HEK293T (cell line): ENCODE measurements at regions of chr15 and their contacts with region 1.

Region 1: GRCh38 chr15:74460871-74461846 is at the start of gene UBL7:
- DNase-seq: peak; percentile 95

Region 2: GRCh38 chr15:74265046-74265639 is 196.0 kb before region 1 on chr15:
- CTCF ChIA-PET with region 1: no interaction called
- POLR2A ChIA-PET with region 1: no interaction called
- DNase-seq: peak; percentile 50

Region 3: DNA sequence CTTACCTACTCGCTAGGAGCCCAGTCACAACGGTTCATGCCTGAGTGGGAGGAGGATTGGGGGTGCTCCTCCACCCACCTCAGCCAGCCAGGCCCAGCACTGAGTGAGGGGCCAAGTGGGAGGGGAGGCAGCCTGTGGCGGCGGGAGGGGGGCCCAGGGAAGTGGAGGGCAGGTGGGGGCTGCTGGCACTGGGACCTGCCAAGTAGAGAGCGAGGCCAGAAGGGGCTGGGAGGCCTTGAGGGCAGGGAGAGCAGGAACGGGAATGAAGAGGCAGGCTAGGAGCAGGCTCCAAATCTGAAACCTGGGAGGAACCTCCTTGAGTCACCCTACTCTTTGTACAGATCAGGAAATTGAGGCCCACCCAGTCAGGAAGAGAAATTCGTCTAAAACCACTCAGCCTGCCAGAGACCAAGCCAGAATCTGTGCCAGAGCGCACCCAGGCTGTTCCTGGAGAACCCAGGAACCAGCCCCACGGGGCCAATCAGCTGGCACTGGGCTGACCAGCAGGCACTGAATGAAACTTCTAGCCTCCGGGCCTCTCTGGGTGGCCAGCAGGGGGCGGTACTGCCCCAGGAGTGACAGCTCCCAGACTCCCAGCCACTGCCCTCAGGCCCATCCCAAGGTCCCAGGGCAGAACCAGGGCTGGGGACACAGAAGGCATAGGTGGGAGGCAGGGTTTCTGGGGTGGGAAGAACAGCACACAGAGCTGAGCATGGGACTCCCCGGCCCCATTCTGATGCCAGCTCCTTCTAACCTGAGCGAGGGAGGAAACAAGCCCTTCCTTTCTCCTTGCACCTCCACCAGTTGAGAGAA is 78.9 kb before region 1 on chr15:
- CTCF ChIA-PET with region 1: no interaction called
- POLR2A ChIA-PET with region 1: interaction called, 13 read pairs
- DNase-seq: peak; percentile 94

Region 4: GRCh38 chr15:74438721-74439316 is 22.3 kb before region 1 on chr15:
- CTCF ChIA-PET with region 1: no interaction called
- POLR2A ChIA-PET with region 1: interaction called, 14 read pairs
- DNase-seq: peak; percentile 85

Region 5: DNA sequence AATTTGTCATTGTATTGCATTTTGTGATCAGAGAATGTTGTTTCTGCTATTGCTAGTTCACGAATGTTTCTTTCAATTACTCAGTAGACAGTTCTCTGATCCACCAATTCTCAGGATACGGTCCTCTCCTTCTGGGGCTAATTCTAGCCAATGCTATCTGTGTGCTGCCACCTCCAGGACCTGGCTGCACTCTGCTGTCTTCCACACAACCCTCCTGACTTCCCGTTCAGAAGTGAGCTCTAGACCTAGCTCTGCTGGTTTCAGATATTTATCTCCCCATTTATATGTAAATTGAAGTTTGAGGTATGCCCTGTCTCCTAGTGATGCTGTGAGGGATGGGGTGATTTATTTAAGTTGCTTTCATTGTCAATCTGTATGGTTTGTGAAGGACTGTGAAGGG is 21.5 kb after region 1 on chr15:
- CTCF ChIA-PET with region 1: interaction called, 3 read pairs
- POLR2A ChIA-PET with region 1: interaction called, 10 read pairs
- DNase-seq: no peak

Region 6: DNA sequence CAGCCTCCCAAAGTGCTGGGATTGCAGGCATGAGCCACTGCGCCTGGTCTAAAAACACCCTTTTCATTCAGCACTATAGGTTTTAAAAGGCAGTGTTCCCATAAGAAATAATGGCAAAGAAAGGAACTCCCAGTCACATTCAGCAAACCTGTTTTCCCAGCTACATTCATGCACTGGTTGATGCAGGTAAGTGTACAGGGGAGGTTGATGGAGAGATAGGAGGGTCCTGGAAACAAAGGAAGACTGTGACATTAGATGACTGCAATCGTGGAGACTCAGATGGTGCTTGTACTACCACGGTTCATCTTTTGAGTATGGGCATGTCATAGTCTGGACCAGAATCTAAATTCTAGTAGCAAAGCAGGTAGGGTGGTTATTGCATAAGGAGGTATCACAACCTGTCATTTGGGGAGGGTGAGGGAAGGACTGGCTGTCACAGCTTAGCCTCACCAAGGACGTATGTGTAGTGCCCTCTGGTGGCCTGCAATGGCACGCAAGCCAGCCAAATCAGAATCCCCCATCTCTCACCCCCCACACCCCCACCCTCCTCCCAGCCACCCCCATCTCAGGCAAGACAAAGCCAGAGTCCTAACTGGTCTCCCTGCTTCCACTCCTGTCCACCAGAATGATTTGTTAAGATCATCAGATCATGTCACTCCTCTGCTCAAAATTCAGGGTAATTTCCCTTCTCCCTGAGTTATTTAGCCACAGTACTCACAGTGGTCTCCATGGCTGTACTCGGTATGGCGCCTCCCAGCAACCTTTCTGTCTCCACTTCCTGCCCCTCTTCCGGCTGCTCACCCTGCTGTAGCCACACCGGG is 28.6 kb after region 1 on chr15:
- CTCF ChIA-PET with region 1: interaction called, 3 read pairs
- POLR2A ChIA-PET with region 1: interaction called, 10 read pairs
- DNase-seq: peak; percentile 79

Region 7: DNA sequence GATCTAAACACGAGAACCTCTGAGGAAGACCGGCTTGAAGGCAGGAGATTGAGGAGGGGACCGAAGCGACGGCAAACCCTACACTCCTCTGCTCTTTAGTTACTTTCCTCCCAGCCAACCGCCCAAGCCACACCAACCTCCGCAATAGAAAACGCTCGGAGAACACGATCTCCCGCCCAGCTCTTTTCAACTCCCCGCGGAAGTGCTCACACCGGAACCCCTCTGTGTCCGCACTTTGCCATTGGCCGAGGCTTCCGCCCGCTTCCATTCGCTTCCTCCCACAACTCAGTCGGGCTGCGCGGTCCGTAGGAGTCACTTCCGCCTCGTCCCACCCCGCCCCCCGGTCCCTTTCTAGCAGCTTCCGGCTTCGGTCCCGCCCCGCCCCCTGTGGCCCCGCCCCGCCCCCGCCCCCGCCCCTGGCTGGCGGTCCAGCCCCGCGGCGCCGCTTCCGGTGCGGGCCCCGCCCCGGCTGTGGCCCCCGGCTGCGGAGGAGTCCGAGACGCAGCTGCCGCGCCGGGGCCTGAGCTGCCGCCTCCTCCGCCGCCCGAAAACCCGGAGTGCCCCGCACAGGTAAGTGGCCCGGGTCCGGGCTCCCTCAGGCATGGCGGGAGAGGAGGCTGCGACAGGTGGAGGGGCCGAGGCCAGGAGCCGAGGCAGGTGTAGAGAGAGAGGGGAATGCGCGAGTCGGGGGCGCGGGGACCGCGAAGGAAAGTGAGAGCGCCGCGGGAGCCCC is 79.8 kb after region 1 on chr15 and contains the start of gene ARID3B:
- CTCF ChIA-PET with region 1: no interaction called
- POLR2A ChIA-PET with region 1: interaction called, 26 read pairs
- DNase-seq: peak; percentile 96

Region 8: DNA sequence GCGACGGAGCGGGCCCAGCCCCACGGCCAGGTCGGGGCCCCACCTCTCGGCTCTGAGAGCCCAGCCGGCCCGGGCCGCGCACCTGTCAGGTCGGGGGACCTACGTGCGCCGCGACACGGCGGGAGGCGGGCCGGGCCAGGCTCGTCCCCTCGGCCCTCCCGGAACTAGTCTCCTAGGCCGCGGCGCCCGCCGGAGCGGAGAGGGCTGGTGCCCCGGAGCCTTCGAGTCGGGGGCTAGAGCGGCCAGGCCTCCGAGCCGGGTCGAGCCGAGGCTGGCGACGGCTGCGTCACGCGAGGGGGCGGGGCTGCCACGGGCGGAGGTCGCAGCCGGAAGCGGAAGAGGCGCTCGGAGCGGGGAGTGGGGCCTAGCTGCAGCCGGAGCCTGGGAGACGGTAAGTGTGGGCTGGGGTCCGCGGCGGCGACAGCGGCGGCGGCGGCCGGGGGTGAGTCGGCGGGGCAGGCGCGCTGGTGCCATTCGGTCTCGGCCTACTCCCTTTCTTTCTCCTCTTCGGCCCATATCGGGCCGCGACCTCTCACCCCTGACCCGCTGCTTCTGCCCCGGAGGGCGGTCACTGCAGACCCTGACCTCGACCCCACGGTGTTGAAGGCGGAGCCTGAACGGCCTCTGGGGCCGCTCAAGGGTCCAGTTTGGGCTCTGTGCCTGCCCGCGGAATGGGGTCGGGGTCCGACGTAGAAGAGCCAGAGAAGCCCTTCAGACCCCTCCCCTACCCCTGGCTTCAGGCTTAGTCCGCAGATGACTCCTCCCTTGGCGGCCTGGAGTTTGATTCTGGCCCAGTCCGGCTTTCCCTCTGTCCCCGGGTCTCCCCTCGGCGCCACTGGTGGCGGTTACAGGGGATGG is 154.6 kb after region 1 on chr15 and contains the start of gene CLK3:
- CTCF ChIA-PET with region 1: no interaction called
- POLR2A ChIA-PET with region 1: interaction called, 18 read pairs
- DNase-seq: peak; percentile 98